Ascending aorta (tissue), 2 donors: ENCODE measurements at regions of chr10 and their contacts with region 1.

Region 1: GRCh38 chr10:24724381-24725228 is 918 bp upstream of the ARHGAP21 start:
- DNase-seq: peak; percentile 94 to 99
- H3K4me3 ChIP-seq: peak overlapping the region; percentile 75 to 83
- H3K27ac ChIP-seq: peak overlapping the region; percentile 92 to 97
- H3K4me1 ChIP-seq: peaks cover 0 to 6% of the 10 kb centered on the region in 2 donors
- H3K27me3 ChIP-seq: no peaks in the 10 kb centered on the region
- CTCF ChIP-seq: no peak

Region 2: GRCh38 chr10:24642622-24643417 is 81.8 kb before region 1 on chr10:
- intact Hi-C with region 1: loop called (anchors 2 kb)
- DNase-seq: no peak
- H3K4me3 ChIP-seq: no peak overlapping the region
- H3K27ac ChIP-seq: no peak overlapping the region
- H3K4me1 ChIP-seq: peaks cover 4 to 19% of the 10 kb centered on the region in 2 donors
- H3K27me3 ChIP-seq: no peaks in the 10 kb centered on the region
- CTCF ChIP-seq: peak; percentile 70 to 74 (median 71)

Region 3: DNA sequence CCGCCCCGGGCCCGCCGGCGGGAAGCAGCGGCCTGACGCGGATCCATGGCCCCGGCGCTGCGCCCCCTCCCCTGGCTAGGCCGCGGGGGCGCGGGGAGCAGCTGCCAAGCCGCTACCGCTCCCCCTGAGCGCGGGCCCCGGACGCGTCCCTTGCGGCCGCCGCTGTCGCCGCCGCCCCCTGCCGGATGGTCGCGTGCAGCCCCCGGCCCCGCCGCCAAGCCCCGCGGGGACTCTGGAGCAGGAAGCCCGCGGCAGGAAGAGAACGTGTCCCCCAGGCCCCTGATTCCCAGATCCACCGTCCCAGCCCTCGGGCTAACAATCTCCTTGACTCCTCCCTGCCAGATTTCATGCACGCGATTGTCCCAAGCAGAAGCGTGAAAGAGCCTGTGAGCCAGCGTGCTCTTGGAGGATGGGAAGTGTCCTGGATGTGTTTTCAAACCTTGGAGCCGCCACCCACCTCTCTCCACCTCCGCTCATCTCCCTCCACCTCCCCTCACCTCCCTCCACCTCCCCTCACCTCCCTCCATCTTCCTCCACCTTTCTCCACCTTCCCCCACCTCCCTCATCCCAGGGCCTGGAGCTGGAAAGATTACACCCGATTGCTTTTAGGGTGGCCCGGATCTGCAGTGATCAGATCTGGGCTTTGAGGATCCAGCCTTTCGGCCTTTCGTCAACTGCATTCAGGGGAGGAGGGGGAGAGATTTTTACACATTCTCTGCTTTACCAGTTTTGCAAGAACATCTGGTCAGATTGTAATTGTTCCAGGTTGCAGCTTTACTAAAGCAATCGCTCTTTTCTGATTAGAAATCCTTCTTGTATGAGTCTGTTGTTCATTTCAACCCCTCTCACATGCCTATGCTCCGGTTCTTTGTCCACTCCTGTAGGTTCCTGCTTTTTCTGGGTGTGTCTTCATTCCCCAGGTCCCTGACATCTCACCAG is 228.4 kb after region 1 on chr10:
- intact Hi-C with region 1: loop called (anchors 2 kb)
- DNase-seq: peak in 1 of 2 donors; percentile 73
- H3K4me3 ChIP-seq: peak overlapping the region; percentile 70 to 82
- H3K27ac ChIP-seq: peak overlapping the region; percentile 38 to 66
- H3K4me1 ChIP-seq: peaks cover 3 to 11% of the 10 kb centered on the region in 2 donors
- H3K27me3 ChIP-seq: no peaks in the 10 kb centered on the region
- CTCF ChIP-seq: peak in 1 of 3 experiments; percentile 3

Region 4: GRCh38 chr10:25016376-25017154 is 292.0 kb after region 1 on chr10 and contains the start of gene THNSL1:
- intact Hi-C with region 1: loop called (anchors 1 kb)
- DNase-seq: peak; percentile 97 to 99
- H3K4me3 ChIP-seq: peak within 1 kb of the TSS; percentile 74 to 77
- H3K27ac ChIP-seq: peak within 1 kb of the TSS; percentile 85 to 88
- H3K4me1 ChIP-seq: peaks cover 0 to 9% of the 10 kb centered on the region in 2 donors
- H3K27me3 ChIP-seq: no peaks in the 10 kb centered on the region
- CTCF ChIP-seq: no peak
- total RNA-seq, gene THNSL1: 0.64 TPM

Region 5: GRCh38 chr10:25080880-25081581 is 356.4 kb after region 1 on chr10:
- intact Hi-C with region 1: loop called (anchors 5 kb)
- DNase-seq: peak; percentile 36 to 91
- H3K4me3 ChIP-seq: peak overlapping the region in 1 of 2 donors; percentile 48
- H3K27ac ChIP-seq: peak overlapping the region; percentile 11 to 75
- H3K4me1 ChIP-seq: peaks cover 0 to 15% of the 10 kb centered on the region in 2 donors
- H3K27me3 ChIP-seq: no peaks in the 10 kb centered on the region
- CTCF ChIP-seq: peak; percentile 77 to 91 (median 86)